AG04449 (cell line): ENCODE measurements at regions of chr6 and their contacts with region 1.

Region 1: GRCh38 chr6:132218059-132218696 is 183.1 kb downstream of the MOXD1 start:
- DNase-seq: no peak
- H3K4me3 ChIP-seq: no peak overlapping the region
- CTCF ChIP-seq: peak; percentile 13

Region 2: GRCh38 chr6:131929264-131929663 is 288.9 kb before region 1 on chr6:
- CTCF ChIA-PET with region 1: interaction called, 106 read pairs
- POLR2A ChIA-PET with region 1: no interaction called
- DNase-seq: no peak
- H3K4me3 ChIP-seq: no peak overlapping the region
- CTCF ChIP-seq: no peak

Region 3: GRCh38 chr6:132140189-132140588 is 78.0 kb before region 1 on chr6:
- CTCF ChIA-PET with region 1: interaction called, 10 read pairs
- POLR2A ChIA-PET with region 1: no interaction called
- DNase-seq: no peak
- H3K4me3 ChIP-seq: no peak overlapping the region
- CTCF ChIP-seq: no peak

Region 4: DNA sequence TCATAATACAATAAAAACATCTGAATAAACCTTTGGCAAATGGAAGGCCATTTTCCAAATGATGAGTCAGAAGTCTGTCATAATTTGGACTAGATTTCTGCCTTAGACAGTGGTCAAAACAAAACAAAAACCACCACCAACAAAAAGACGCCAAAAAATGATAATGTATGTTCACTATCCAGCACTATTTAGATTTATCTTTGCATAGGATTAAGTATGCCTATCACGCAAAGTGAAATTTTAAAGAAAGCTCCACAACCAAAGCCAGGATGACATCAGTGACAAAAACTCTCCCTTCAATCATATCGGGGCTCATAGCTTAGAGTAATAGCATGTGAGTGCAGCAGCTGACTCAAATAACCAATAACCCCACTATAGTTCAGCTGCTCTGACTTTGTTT is 18.8 kb before region 1 on chr6:
- CTCF ChIA-PET with region 1: interaction called, 20 read pairs
- POLR2A ChIA-PET with region 1: no interaction called
- DNase-seq: no peak
- H3K4me3 ChIP-seq: no peak overlapping the region
- CTCF ChIP-seq: no peak

Region 5: GRCh38 chr6:132236744-132237143 is 18.6 kb after region 1 on chr6:
- CTCF ChIA-PET with region 1: interaction called, 22 read pairs
- POLR2A ChIA-PET with region 1: no interaction called
- DNase-seq: no peak
- H3K4me3 ChIP-seq: no peak overlapping the region
- CTCF ChIP-seq: no peak